Activated CD8-positive, alpha-beta memory T cell treated with anti-CD3 and anti-CD28 coated beads, Interleukin-2, amount 10 ng/mL, durations not matched to agents 7 days and 5 days (primary cell): ENCODE measurements at regions of chr19 and their contacts with region 1.

Region 1: DNA sequence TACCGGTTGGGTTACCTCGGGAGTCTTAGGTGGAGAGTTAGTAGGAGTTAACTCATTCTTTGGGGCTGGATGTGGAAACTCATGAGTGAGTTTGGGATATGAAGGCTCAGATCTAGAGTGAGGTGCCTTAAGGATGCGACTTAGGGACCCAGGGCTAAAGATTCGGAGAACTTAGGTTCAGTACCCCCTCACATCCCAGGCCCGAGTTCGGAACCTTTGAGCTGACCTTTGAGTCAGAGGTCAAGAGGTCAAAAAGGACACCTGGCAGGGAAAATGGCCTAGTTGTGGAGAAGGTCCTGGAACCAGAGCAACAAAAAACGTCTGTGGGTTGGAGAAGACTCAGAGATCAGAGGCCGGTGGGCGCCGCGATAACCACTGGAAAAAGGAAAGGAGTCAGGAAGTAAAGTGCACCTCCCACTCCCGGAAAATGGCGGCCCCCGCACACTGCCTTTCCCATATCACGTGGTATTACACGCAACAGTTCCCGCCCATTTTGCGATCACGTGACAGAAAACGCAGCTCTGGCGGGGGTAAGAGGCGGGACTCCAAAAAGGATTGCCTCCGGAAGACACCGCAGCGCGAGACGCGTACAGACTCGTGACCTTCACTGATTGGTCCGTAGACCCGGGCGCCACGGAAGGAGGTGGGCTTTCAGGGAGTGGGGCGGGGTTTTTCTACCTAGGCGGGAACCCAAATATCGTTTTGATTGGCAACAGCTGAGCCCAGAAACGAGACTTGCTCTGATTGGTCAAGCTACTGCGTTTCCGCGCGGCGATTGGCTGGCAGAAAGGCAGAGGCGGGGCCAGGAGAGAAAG is at the start of gene ACTMAP:
- DNase-seq: peak; percentile 100
- ATAC-seq: peak; percentile 86
- H3K4me3 Mint-ChIP-seq: peak within 1 kb of the TSS; percentile 93
- H3K27ac Mint-ChIP-seq: peak within 1 kb of the TSS; percentile 100
- H3K4me1 Mint-ChIP-seq: peaks cover 36% of the 10 kb centered on the region
- H3K27me3 Mint-ChIP-seq: no peaks in the 10 kb centered on the region
- total RNA-seq, gene ACTMAP: 13.7 to 18.2 TPM

Region 2: DNA sequence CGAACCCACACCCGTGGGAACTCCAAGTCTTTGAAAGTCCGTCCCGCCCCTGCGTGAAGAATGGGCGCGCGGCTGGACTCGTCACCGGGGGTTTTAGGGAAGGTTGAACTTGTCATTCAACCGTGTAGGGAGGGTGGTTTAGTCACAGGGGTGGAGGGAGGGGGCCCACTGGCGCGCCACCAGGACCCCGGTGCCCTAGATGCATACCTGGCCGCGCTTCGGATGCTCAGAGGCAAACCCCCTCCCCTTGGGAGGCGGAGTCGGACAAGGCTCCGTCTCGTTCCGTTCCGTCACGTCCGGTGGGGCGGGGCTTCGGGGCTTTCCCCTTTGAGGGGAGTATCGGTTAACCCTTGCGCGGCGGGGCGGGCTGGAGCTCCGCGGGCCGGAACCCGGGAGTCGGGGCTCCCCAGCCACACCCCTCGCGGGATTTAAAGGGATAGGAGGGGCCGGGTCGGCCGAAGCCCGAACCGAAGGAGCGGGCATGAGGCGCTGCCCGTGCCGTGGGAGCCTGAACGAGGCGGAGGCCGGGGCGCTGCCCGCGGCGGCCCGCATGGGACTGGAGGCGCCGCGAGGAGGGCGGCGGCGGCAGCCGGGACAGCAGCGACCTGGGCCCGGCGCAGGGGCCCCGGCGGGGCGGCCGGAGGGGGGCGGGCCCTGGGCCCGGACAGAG is 33.5 kb before region 1 on chr19 and contains the starts of genes COQ8B and ITPKC:
- CTCF ChIA-PET with region 1: interaction called, 14 read pairs
- DNase-seq: peak; percentile 100
- ATAC-seq: peak; percentile 70
- H3K4me3 Mint-ChIP-seq: peak within 1 kb of the TSS; percentile 94
- H3K27ac Mint-ChIP-seq: peak within 1 kb of the TSS; percentile 96
- H3K4me1 Mint-ChIP-seq: peaks cover 64% of the 10 kb centered on the region
- H3K27me3 Mint-ChIP-seq: no peaks in the 10 kb centered on the region
- total RNA-seq, gene COQ8B: 28.0 to 30.9 TPM
- total RNA-seq, gene ITPKC: 5.6 to 5.8 TPM

Region 3: DNA sequence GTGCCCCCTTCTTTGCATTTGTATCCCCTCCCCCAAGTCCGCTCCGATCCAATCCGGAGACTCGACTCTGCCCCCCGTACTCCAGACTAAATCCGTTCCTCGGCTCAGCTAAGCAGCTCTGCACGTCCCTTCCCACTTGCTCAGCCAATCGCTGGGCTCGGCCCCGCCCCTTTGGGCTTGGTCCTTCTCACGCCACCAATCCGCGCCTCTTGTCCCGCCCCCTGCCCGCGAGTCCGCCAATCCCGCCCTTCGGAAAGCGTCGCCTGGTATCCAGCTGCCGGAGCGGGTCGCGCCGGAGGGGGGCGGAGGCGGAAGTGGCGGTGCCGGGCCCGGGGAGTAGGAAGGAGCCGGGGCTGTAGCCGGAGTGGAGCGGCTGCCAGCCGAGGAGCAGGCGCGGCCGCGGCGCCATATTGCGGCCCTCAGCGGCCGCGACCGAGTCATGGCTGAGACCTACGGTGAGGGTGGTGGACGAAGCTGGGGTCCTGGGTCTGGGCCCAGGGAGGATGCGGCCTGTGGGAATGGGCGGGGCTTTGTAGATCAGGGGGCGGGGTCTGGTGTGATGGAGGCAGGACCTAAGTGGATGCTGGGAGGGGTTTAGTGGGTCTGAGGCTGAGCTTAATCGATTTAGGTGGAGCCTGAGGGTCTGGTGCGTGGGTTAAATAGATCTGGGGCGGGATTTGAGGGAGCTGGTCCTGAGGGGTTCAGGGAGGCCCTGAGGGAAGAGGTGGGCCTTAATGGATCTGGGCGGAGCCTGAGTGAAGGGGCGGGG is 27.9 kb after region 1 on chr19 and contains the start of gene RAB4B:
- CTCF ChIA-PET with region 1: interaction called, 43 read pairs
- DNase-seq: peak; percentile 100
- ATAC-seq: peak; percentile 81
- H3K4me3 Mint-ChIP-seq: peak within 1 kb of the TSS; percentile 87
- H3K27ac Mint-ChIP-seq: peak within 1 kb of the TSS; percentile 99
- H3K4me1 Mint-ChIP-seq: peaks cover 33% of the 10 kb centered on the region
- H3K27me3 Mint-ChIP-seq: no peaks in the 10 kb centered on the region
- total RNA-seq, gene RAB4B: 36.2 to 56.7 TPM

Region 4: GRCh38 chr19:40806488-40807468 is 56.5 kb after region 1 on chr19:
- CTCF ChIA-PET with region 1: interaction called, 44 read pairs
- DNase-seq: peak; percentile 87
- ATAC-seq: peak; percentile 54
- H3K4me3 Mint-ChIP-seq: peak overlapping the region; percentile 31
- H3K27ac Mint-ChIP-seq: peak overlapping the region; percentile 89
- H3K4me1 Mint-ChIP-seq: peaks cover 83% of the 10 kb centered on the region
- H3K27me3 Mint-ChIP-seq: peaks cover 4% of the 10 kb centered on the region